Activated CD4-positive, alpha-beta T cell treated with anti-CD3 and anti-CD28 coated beads, Interleukin-2, amount 10 ng/mL, durations not matched to agents 24 days and 14 days (primary cell): ENCODE measurements at regions of chr1 and their contacts with region 1.

Region 1: GRCh38 chr1:17125756-17126237 is 6.5 kb upstream of the PADI2 start:
- DNase-seq: peak; percentile 94
- H3K4me3 Mint-ChIP-seq: no peak overlapping the region
- H3K27ac Mint-ChIP-seq: no peak overlapping the region
- H3K4me1 Mint-ChIP-seq: peaks cover 2% of the 10 kb centered on the region
- H3K27me3 Mint-ChIP-seq: peaks cover 4% of the 10 kb centered on the region

Region 2: DNA sequence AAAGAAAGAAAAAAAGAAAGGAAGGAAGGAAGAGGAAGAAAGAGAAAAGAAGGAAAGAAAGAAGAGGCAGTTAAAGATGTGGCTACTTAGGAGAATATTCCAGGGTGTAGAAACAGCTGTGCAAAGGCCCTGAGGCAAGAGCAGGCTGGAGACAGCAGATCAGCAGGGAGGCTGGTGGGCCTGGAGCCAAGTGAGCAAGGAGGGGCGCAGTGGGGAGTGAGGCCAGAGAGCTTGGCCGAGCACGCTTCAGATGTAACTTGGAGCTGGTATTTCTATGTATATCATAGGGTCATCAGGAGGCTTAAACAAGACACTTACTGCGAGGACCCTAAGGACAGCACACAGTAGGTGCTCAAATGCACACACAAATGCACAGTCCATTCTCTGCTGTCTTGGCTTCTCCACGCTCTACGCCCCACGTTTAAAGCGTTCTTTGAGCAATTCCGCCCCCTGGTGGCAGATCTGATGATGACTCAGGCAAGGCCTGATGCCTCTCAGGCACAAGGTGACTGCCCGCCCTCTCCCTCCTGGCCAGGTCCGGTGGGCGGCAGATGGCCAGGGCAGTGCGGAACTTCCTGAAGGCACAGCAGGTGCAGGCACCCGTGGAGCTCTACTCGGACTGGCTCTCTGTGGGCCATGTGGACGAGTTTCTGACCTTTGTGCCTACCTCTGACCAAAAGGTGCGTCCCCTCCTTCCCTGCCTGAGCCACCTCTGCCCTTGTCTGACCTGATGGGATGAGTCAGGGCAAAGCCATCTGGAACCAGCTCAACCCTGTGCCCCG is 111.2 kb after region 1 on chr1:
- intact Hi-C with region 1: loop called (anchors 1 kb)
- DNase-seq: peak; percentile 96
- H3K4me3 Mint-ChIP-seq: no peak overlapping the region
- H3K27ac Mint-ChIP-seq: no peak overlapping the region
- H3K4me1 Mint-ChIP-seq: no peaks in the 10 kb centered on the region
- H3K27me3 Mint-ChIP-seq: peaks cover 3% of the 10 kb centered on the region

Region 3: GRCh38 chr1:17335821-17336710 is 210.3 kb after region 1 on chr1:
- intact Hi-C with region 1: loop called (anchors 10 kb)
- DNase-seq: peak; percentile 87
- H3K4me3 Mint-ChIP-seq: no peak overlapping the region
- H3K27ac Mint-ChIP-seq: no peak overlapping the region
- H3K4me1 Mint-ChIP-seq: peaks cover 3% of the 10 kb centered on the region
- H3K27me3 Mint-ChIP-seq: peaks cover 3% of the 10 kb centered on the region

Region 4: DNA sequence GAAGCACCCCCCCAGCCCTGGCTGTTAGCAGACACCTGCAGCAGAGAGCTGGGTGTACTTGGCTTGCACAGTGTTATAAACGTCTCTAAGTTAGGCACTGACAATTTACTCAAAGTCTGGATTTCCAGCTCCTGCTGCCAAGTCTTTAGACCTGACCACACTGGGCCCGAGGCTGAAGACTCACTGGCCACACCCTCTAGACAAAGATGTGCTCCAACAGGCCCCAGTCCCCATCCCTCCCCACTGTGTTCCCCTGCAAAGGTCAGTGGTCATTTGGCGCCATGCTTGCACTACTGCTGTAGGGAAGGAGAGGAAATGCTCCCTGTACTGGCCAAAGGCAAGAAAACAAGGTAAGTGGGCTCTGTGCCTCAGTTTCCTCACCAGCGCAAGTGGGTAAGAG is 277.3 kb after region 1 on chr1:
- intact Hi-C with region 1: no loop called
- DNase-seq: no peak
- H3K4me3 Mint-ChIP-seq: no peak overlapping the region
- H3K27ac Mint-ChIP-seq: no peak overlapping the region
- H3K4me1 Mint-ChIP-seq: no peaks in the 10 kb centered on the region
- H3K27me3 Mint-ChIP-seq: no peaks in the 10 kb centered on the region